ENCODE measurements at regions of chr2 and their contacts with region 1.

Region 1: DNA sequence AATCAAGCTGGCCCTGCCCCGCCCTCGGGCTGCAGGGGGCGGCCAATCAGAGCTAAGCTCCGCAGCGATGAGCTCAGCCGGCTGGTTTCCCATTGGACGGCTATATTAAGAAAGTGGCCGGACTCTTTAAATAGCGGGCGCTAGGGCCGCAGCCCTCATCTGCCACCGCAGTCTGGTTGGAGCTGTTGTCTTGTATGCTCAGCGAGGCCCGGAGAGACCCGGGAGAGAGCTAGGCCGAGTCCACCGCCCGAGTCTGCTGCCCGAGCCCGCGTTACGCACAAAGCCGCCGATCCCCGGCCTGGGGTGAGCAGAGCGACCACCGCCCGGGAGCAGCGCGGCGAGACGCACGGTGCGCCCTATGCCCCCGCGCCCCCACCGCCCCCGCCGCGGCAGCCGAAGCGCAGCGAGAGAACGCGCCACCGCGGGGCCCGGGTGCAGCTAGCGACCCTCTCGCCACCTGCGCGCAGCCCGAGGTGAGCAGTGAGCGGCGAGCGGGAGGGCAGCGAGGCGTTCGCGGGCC is at the start of gene RHOB:
- DNase-seq: peak; percentile 77 to 97 (median 86)
- ATAC-seq: peak; percentile 96
- H3K4me3 ChIP-seq: peak within 1 kb of the TSS; percentile 71 to 77
- H3K4me3 Mint-ChIP-seq: peak within 1 kb of the TSS; percentile 85
- H3K27ac ChIP-seq: peak within 1 kb of the TSS; percentile 66 to 78
- H3K27ac Mint-ChIP-seq: peak within 1 kb of the TSS; percentile 57
- H3K4me1 ChIP-seq: peaks cover 17% of the 10 kb centered on the region
- H3K4me1 Mint-ChIP-seq: peaks cover 13% of the 10 kb centered on the region
- H3K27me3 ChIP-seq: peaks cover 0 to 7% of the 10 kb centered on the region in 2 experiments
- H3K27me3 Mint-ChIP-seq: peaks cover 10% of the 10 kb centered on the region
- CTCF ChIP-seq: no peak
- total RNA-seq, gene RHOB: 24.0 to 24.7 TPM

Region 2: DNA sequence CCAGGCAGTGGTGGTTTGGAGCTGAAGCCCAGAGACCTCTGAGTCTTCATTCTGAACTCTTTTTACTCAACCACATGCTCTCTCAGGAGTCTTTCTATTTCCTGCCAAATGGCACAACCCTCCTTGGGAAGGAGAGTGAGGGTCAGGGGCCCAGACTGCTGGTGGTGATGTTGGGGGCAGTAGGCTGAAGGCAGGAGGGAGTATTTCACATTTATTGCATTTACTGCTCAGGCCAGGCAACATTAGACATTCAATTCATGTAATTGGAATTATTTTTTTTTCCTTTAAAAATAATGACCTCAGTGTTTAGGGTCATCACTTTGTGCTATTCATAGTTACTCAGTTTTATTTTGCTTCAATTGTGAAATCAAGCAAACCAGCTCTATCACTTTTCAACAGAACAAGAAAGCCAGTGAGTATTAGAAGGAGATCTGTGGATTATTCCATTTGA is 1546.3 kb before region 1 on chr2:
- CTCF ChIA-PET with region 1: no interaction called
- POLR2A ChIA-PET with region 1: no interaction called
- intact Hi-C with region 1: no loop called
- DNase-seq: no peak
- ATAC-seq: no peak
- H3K4me3 ChIP-seq: no peak overlapping the region
- H3K4me3 Mint-ChIP-seq: no peak overlapping the region
- H3K27ac ChIP-seq: no peak overlapping the region
- H3K27ac Mint-ChIP-seq: no peak overlapping the region
- H3K4me1 ChIP-seq: no peaks in the 10 kb centered on the region
- H3K4me1 Mint-ChIP-seq: no peaks in the 10 kb centered on the region
- H3K27me3 ChIP-seq: no peaks in the 10 kb centered on the region
- H3K27me3 Mint-ChIP-seq: no peaks in the 10 kb centered on the region
- CTCF ChIP-seq: no peak

Region 3: GRCh38 chr2:20576598-20577115 is 129.7 kb after region 1 on chr2:
- CTCF ChIA-PET with region 1: no interaction called
- POLR2A ChIA-PET with region 1: interaction called, 5 read pairs
- intact Hi-C with region 1: loop called in 1 of 2 experiments (anchors 1 kb)
- DNase-seq: peak in 5 of 9 experiments; percentile 13 to 82 (median 53)
- ATAC-seq: peak; percentile 80
- H3K4me3 ChIP-seq: peak overlapping the region; percentile 33 to 36
- H3K4me3 Mint-ChIP-seq: peak overlapping the region; percentile 75
- H3K27ac ChIP-seq: peak overlapping the region; percentile 31 to 74
- H3K27ac Mint-ChIP-seq: peak overlapping the region; percentile 91
- H3K4me1 ChIP-seq: peaks cover 8% of the 10 kb centered on the region
- H3K4me1 Mint-ChIP-seq: peaks cover 13% of the 10 kb centered on the region
- H3K27me3 ChIP-seq: no peaks in the 10 kb centered on the region
- H3K27me3 Mint-ChIP-seq: no peaks in the 10 kb centered on the region
- CTCF ChIP-seq: no peak

Region 4: DNA sequence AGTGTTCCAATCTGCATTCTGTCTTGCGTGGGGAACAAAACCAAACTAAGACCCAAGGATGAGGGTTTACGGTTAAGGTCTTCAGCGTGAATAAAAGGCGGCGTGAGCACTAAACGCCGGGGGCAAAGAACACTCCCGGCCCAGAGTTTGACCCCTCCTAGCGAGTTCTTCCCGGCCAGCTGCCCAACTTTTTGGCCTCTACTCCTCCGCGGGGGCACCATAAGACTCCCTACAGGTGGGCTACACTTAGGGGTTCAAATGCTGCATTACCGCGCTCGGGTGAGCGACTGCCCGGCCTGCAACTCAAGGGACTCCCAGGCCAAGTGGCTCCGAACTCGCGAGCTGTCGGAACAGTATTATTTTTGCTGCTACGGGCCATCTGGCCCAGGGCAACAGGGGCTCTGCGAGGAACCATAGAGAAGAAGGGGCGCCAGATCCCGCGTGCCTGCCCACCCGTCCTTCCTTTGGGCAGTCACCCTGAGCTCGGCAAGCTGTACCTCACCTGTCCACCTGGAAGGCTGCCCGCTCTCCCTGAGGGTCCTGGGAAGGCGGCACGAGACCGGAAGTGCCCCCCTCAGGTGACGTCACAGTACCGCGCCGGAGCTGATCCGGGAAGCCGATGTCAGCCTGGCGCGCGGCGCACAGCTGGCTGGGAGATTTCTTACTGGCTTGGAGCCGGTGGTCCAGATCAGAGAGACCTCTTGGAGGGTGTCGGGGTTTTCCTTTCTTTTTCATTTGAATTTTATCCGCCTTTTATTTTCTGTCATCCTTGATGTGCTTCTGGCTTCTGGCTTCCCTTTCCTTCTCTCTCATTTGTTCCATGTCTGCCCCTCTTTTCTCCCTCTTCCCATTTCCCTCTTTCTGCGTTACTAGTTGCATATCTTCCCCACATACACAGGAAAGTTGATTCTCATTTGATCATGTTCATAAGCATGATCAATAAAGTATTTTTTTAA is 375.8 kb after region 1 on chr2 and contains the start of gene LDAH:
- CTCF ChIA-PET with region 1: no interaction called
- POLR2A ChIA-PET with region 1: interaction called, 3 read pairs
- intact Hi-C with region 1: loop called (anchors 2 to 10 kb)
- DNase-seq: peak; percentile 67 to 92 (median 86)
- ATAC-seq: peak; percentile 84
- H3K4me3 ChIP-seq: peak within 1 kb of the TSS; percentile 79 to 86
- H3K4me3 Mint-ChIP-seq: peak within 1 kb of the TSS; percentile 97
- H3K27ac ChIP-seq: peak within 1 kb of the TSS; percentile 89 to 94
- H3K27ac Mint-ChIP-seq: peak within 1 kb of the TSS; percentile 99
- H3K4me1 ChIP-seq: no peaks in the 10 kb centered on the region
- H3K4me1 Mint-ChIP-seq: peaks cover 28% of the 10 kb centered on the region
- H3K27me3 ChIP-seq: no peaks in the 10 kb centered on the region
- H3K27me3 Mint-ChIP-seq: no peaks in the 10 kb centered on the region
- CTCF ChIP-seq: no peak
- total RNA-seq, gene LDAH: 3.0 to 4.6 TPM

Region 5: DNA sequence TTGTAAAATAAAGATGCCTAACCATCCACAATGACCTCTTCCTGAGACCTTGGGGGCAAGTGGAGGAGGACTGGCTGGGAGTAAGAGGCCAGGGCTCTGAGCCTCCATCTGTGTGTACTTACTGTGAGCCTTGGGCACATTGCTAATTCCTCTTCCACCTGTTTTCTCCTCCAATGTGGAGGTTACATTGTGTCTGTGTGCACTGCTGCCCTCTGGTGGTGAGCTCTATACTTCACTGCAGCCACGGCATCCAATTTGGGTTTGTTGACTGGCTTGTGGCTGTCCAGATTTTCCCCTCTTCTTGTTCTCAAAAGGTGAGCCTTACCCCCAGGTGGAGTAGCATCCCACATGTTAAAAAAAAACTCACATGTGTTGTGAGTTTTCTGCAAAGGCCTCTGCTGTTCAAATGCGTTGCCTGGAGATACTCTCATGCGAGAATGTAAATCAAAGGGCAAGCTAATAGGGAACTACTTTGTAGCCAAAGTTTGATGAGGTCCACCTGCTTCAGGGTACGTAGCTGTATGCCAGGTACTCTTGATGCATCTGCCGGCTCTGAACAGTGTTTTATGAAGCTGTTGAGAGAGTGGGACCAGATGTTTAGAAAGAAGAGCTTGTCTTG is 516.1 kb after region 1 on chr2:
- CTCF ChIA-PET with region 1: interaction called, 9 read pairs
- POLR2A ChIA-PET with region 1: interaction called, 3 read pairs
- intact Hi-C with region 1: loop called in 1 of 2 experiments (anchors 2 kb)
- DNase-seq: peak; percentile 41 to 76 (median 67)
- ATAC-seq: no peak
- H3K4me3 ChIP-seq: no peak overlapping the region
- H3K4me3 Mint-ChIP-seq: no peak overlapping the region
- H3K27ac ChIP-seq: no peak overlapping the region
- H3K27ac Mint-ChIP-seq: no peak overlapping the region
- H3K4me1 ChIP-seq: no peaks in the 10 kb centered on the region
- H3K4me1 Mint-ChIP-seq: no peaks in the 10 kb centered on the region
- H3K27me3 ChIP-seq: no peaks in the 10 kb centered on the region
- H3K27me3 Mint-ChIP-seq: peaks cover 10% of the 10 kb centered on the region
- CTCF ChIP-seq: peak; percentile 71

Measured in CD8-positive, alpha-beta T cell (primary cell).